ENCODE measurements at regions of chr16 and their contacts with region 1.

Region 1: GRCh38 chr16:72312828-72313227 is 140.9 kb upstream of the PMFBP1 start:
- DNase-seq: no peak
- H3K4me3 ChIP-seq: no peak overlapping the region
- H3K27ac ChIP-seq: no peak overlapping the region
- H3K4me1 ChIP-seq: no peaks in the 10 kb centered on the region
- H3K27me3 ChIP-seq: no peaks in the 10 kb centered on the region
- CTCF ChIP-seq: no peak
- EP300 ChIP-seq: no peak
- POLR2A ChIP-seq: no peak

Region 2: DNA sequence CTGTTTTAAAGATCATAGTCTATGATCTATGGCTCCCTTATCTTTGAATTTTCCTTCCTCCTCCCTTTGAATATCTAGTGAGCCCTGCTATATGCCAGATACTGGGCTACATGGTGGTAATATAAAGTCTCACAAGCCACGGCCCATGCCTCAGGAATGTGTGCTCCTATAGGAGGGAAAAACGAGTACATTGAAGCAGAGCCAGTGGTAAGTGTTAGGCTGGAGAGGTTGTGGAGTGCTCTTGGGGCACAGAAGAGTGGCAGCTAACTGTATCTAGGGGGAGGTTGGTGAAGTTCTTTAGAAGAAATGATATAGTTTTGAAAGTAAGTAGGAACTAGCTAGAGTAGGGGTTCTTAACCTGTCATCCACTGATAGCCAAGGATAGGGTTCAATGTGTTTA is 35.1 kb before region 1 on chr16:
- intact Hi-C with region 1: loop called in 1 of 4 experiments (anchors 2 kb)
- DNase-seq: no peak
- H3K4me3 ChIP-seq: no peak overlapping the region
- H3K27ac ChIP-seq: no peak overlapping the region
- H3K4me1 ChIP-seq: no peaks in the 10 kb centered on the region
- H3K27me3 ChIP-seq: no peaks in the 10 kb centered on the region
- CTCF ChIP-seq: no peak
- EP300 ChIP-seq: no peak
- POLR2A ChIP-seq: no peak

Region 3: DNA sequence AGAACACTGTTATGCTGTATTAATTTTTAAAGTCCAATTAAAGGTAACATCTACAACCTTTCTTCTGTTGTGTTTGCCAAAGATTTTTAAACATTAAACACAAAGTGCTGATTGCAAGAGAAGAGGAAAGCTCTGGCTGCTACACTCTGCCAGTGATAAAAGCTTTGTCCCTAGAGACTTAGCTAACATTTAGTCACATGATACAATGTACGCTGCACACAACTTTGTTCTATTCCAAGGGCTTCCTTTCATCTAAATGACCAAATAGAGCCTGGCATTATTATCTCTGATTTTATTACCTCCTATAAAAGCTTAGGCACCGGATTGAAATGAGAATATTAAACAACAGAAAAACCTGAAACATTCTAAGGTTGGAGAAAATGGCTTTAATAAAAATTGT is 247.8 kb after region 1 on chr16:
- intact Hi-C with region 1: no loop called
- DNase-seq: no peak
- H3K4me3 ChIP-seq: no peak overlapping the region
- H3K27ac ChIP-seq: no peak overlapping the region
- H3K4me1 ChIP-seq: no peaks in the 10 kb centered on the region
- H3K27me3 ChIP-seq: no peaks in the 10 kb centered on the region
- CTCF ChIP-seq: no peak
- EP300 ChIP-seq: no peak
- POLR2A ChIP-seq: no peak